ENCODE measurements at regions of chr6 and their contacts with region 1.

Region 1: GRCh38 chr6:127420556-127420955 is 38.6 kb downstream of the KIAA0408 start:
- DNase-seq: peak in 8 of 9 donors; percentile 27 to 75 (median 56)
- ATAC-seq: peak; percentile 99
- H3K4me3 ChIP-seq: no peak overlapping the region
- H3K4me3 Mint-ChIP-seq: no peak overlapping the region
- H3K27ac ChIP-seq: no peak overlapping the region
- H3K27ac Mint-ChIP-seq: peak overlapping the region in 6 of 9 donors; percentile 5 to 81 (median 16)
- H3K4me1 ChIP-seq: no peaks in the 10 kb centered on the region
- H3K4me1 Mint-ChIP-seq: peaks cover 0 to 11% (median 5%) of the 10 kb centered on the region in 7 donors
- H3K27me3 ChIP-seq: no peaks in the 10 kb centered on the region
- H3K27me3 Mint-ChIP-seq: no peaks in the 10 kb centered on the region

Region 2: GRCh38 chr6:127186889-127187288 is 233.7 kb before region 1 on chr6:
- CTCF ChIA-PET with region 1: no interaction called
- POLR2A ChIA-PET with region 1: no interaction called
- intact Hi-C with region 1: loop called in 1 of 2 experiments (anchors 1 kb)
- DNase-seq: peak; percentile 1 to 60 (median 22)
- ATAC-seq: peak; percentile 63
- H3K4me3 ChIP-seq: no peak overlapping the region
- H3K4me3 Mint-ChIP-seq: no peak overlapping the region
- H3K27ac ChIP-seq: no peak overlapping the region
- H3K27ac Mint-ChIP-seq: no peak overlapping the region
- H3K4me1 ChIP-seq: no peaks in the 10 kb centered on the region
- H3K4me1 Mint-ChIP-seq: no peaks in the 10 kb centered on the region
- H3K27me3 ChIP-seq: no peaks in the 10 kb centered on the region
- H3K27me3 Mint-ChIP-seq: peaks cover 4 to 14% (median 8%) of the 10 kb centered on the region in 5 donors

Region 3: DNA sequence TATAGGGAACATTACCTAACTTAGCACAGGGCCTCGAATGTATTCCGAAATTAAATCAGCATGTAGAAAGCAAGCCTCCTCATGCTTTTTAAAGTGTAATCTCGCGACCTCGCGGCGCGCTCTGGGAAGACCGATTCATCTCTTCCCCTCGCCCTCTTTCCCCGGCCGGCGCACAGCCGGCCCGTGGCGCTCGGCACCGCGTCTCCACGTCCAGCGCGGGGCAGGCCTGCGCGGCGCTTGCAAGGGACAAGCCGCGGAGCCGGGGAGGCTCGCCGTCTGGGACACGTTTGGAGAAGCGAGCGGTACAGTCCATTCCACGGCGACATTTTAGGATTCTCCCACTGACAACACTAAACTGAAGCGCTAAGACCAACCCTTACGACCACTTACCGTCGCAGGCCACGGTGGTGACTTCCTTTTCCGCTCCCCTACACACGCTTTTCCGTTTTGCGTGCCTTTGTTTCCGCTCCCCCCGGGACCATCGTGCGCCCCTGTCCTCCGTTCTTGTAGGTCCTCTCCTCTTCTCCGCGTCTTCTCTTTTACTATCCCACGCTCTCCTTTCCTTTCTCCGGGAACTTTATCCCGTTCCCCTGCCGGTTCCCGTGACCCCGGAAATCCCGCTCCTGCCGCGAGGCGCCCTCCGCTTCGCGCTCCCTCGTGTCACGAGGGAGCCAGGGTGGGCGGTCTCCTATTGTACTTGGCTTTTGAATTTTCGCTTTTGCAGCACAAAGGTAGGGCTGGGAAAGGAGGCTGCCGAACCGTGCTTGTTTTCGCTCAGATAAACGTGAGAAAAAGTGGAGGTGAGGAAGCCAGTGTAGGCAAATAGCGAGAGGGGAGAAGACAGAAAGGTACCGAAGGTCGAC is 77.4 kb before region 1 on chr6 and contains the start of gene ECHDC1:
- CTCF ChIA-PET with region 1: no interaction called
- POLR2A ChIA-PET with region 1: no interaction called
- intact Hi-C with region 1: loop called (anchors 1 to 2 kb)
- DNase-seq: peak; percentile 45 to 76 (median 70)
- ATAC-seq: peak; percentile 87
- H3K4me3 ChIP-seq: peak within 1 kb of the TSS; percentile 83
- H3K4me3 Mint-ChIP-seq: no peak within 1 kb of the TSS
- H3K27ac ChIP-seq: peak within 1 kb of the TSS; percentile 91
- H3K27ac Mint-ChIP-seq: no peak within 1 kb of the TSS
- H3K4me1 ChIP-seq: peaks cover 34 to 39% of the 10 kb centered on the region in 2 donors
- H3K4me1 Mint-ChIP-seq: peaks cover 0 to 12% (median 9%) of the 10 kb centered on the region in 7 donors
- H3K27me3 ChIP-seq: no peaks in the 10 kb centered on the region
- H3K27me3 Mint-ChIP-seq: no peaks in the 10 kb centered on the region
- total RNA-seq, gene ECHDC1: 18.1 to 46.5 (median 34.3) TPM

Region 4: DNA sequence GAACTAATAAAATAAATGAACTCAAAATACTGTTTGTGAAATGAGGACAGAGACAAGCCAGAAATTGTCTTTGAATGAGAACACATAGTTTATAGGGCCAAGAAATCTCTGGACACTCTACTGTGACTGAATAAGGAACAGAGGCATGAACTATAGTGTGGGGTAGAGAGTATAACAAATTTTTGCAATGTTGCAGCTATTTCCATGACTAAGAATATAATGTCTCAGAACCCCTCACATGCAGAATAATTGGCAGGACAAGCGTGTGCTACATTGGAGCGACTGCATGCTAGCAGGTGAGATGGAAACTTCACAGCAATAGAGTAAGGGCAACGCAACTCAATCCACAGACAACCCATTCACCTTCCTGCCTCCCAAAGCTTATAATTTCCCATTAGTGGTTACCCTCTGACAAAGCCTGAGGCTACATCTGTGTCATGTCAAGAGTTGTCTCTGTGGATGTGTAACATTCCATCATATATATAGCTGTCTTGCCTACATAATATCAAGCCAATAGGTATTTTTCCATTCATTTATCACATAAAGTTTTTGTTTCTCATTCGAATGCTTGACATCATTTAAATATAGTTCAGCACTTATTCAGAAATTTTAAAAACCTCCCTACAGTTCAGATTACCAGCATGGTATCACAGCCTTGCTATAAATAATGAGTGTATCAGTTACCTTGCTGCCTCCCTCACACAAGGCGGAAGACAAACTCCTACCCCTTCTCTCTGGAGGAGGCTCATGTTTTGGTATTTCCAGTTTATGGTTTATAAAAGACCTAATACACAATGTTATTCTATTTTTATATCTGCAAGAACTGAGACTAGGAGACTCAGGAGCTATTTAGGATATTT is 29.2 kb before region 1 on chr6:
- CTCF ChIA-PET with region 1: no interaction called
- POLR2A ChIA-PET with region 1: no interaction called
- intact Hi-C with region 1: no loop called
- DNase-seq: no peak
- ATAC-seq: no peak
- H3K4me3 ChIP-seq: no peak overlapping the region
- H3K4me3 Mint-ChIP-seq: no peak overlapping the region
- H3K27ac ChIP-seq: no peak overlapping the region
- H3K27ac Mint-ChIP-seq: no peak overlapping the region
- H3K4me1 ChIP-seq: no peaks in the 10 kb centered on the region
- H3K4me1 Mint-ChIP-seq: no peaks in the 10 kb centered on the region
- H3K27me3 ChIP-seq: no peaks in the 10 kb centered on the region
- H3K27me3 Mint-ChIP-seq: peaks cover 0 to 3% (median 0%) of the 10 kb centered on the region in 5 donors

Measured in naive thymus-derived CD4-positive, alpha-beta T cell (primary cell).